Thyroid gland (tissue), 4 donors: ENCODE measurements at regions of chr16 and their contacts with region 1.

Region 1: DNA sequence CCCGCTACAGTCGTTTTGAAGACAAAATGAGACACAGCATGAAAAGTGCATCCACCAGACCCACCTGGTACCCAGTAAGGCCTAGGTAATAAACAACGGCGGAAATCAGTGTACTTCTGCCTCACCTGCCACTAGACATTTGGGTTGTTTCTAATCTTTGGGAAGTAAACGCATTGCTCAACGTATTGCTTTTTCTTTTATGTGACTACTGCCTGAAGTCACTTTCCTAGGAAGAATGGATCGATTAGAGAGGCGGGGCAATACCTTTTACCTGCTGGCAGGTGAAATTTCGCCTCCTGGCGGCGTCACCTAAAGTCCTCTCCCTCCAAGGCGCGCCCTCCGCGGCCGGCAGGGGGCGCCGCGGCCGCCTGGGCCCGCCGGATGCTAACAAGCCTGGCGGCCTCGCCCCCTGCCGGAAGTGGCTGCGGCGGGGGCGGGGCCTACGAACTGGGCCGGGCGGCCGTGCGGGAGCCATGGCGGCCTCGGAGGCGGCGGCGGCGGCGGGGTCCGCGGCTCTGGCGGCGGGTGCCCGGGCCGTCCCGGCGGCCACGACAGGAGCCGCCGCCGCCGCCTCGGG is at the start of gene ATMIN:
- DNase-seq: peak; percentile 86 to 89
- H3K4me3 ChIP-seq: peak within 1 kb of the TSS; percentile 38 to 64 (median 59)
- H3K27ac ChIP-seq: peak within 1 kb of the TSS in 2 of 3 donors; percentile 28 to 51
- H3K4me1 ChIP-seq: peaks cover 24 to 31% of the 10 kb centered on the region in 2 donors
- H3K27me3 ChIP-seq: no peaks in the 10 kb centered on the region
- CTCF ChIP-seq: peak; percentile 86 to 99 (median 94)
- POLR2A ChIP-seq: peak; percentile 23 to 90
- total RNA-seq, gene ATMIN: 49.2 to 57.6 (median 53.3) TPM

Region 2: GRCh38 chr16:81181013-81181720 is 145.7 kb after region 1 on chr16:
- intact Hi-C with region 1: loop called (anchors 10 kb)
- DNase-seq: peak; percentile 88 to 93
- H3K4me3 ChIP-seq: no peak overlapping the region
- H3K27ac ChIP-seq: peak overlapping the region; percentile 53 to 72 (median 61)
- H3K4me1 ChIP-seq: peaks cover 0 to 8% of the 10 kb centered on the region in 2 donors
- H3K27me3 ChIP-seq: no peaks in the 10 kb centered on the region
- CTCF ChIP-seq: no peak
- POLR2A ChIP-seq: peak in 1 of 2 donors; percentile 62